ENCODE measurements at regions of chr16 and their contacts with region 1.

Region 1: GRCh38 chr16:84947022-84947421 is 64.3 kb downstream of the ZDHHC7 start:
- DNase-seq: peak in 1 of 4 donors; percentile 33
- ATAC-seq: no peak
- H3K4me3 ChIP-seq: no peak overlapping the region
- H3K27ac ChIP-seq: no peak overlapping the region
- H3K4me1 ChIP-seq: peaks cover 3% of the 10 kb centered on the region
- H3K27me3 ChIP-seq: no peaks in the 10 kb centered on the region
- CTCF ChIP-seq: no peak
- POLR2A ChIP-seq: no peak

Region 2: DNA sequence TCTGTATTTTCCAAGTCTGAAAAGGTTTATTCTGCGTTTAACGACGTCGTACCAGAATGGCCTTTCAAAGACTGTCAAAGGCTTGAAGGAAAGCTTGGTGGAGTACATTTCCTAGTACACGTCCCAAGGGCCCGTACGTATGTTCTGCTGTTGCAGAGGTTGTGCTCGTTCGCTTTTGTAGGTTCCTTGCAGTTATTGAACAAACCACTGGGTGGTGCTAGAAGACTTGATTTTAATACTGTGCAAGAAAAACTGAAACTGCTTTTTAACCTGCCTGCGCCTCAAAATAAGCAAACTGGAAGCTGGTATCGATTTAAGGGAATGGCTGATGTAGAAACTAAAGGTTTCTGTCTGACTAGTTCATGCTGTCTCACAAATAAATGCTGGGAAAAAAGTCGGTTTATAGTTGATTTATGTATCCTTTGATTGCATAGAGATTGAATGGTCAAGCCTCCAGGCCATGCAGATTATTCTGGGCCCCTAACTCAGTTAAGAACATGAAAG is 192.6 kb before region 1 on chr16:
- intact Hi-C with region 1: loop called (anchors 5 kb)
- DNase-seq: peak; percentile 69 to 90 (median 78)
- ATAC-seq: peak; percentile 94
- H3K4me3 ChIP-seq: no peak overlapping the region
- H3K27ac ChIP-seq: peak overlapping the region in 3 of 4 donors; percentile 42 to 53 (median 49)
- H3K4me1 ChIP-seq: peaks cover 14% of the 10 kb centered on the region
- H3K27me3 ChIP-seq: no peaks in the 10 kb centered on the region
- CTCF ChIP-seq: peak; percentile 57 to 89 (median 83)
- POLR2A ChIP-seq: no peak

Region 3: DNA sequence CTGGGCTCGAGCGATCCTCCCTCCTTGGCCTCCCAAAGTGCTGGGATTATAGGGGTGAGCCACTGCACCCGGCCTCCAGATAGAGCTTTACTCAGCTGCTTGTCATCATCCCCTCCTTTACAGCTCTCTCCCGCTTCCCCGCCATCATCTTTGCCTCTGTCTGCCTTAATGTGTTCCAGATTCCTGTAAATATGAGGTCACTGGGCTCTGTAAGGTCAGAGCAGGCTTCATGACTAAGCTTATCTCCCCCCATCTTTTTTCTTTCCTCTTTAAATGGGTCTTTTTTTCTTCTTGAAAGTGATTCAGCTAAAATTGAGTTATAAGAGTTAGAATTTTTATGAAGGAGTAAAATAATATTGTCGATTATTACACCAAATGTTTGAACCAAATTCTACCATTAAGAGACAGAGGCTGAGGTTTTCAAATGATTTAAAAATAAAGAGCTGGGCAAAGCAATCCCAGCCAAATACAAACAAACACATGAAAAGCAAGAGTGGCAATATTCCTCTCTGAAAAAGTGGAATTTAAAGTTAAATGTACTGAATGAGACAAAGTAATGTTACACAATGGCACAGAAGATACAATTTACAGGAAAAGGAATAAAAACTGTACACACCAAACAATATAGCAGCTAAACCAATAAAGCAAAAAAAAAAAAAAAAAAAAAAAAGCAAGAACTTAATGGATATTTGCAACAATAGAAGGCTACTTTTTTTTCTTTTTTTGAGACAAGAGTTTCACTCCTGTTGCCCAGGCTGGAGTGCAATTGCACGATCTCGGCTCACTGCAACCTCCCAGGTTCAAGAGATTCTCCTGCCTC is 65.1 kb before region 1 on chr16:
- intact Hi-C with region 1: no loop called
- DNase-seq: peak in 2 of 4 donors; percentile 10 to 35
- ATAC-seq: no peak
- H3K4me3 ChIP-seq: no peak overlapping the region
- H3K27ac ChIP-seq: no peak overlapping the region
- H3K4me1 ChIP-seq: peaks cover 10% of the 10 kb centered on the region
- H3K27me3 ChIP-seq: no peaks in the 10 kb centered on the region
- CTCF ChIP-seq: no peak
- POLR2A ChIP-seq: no peak

Region 4: DNA sequence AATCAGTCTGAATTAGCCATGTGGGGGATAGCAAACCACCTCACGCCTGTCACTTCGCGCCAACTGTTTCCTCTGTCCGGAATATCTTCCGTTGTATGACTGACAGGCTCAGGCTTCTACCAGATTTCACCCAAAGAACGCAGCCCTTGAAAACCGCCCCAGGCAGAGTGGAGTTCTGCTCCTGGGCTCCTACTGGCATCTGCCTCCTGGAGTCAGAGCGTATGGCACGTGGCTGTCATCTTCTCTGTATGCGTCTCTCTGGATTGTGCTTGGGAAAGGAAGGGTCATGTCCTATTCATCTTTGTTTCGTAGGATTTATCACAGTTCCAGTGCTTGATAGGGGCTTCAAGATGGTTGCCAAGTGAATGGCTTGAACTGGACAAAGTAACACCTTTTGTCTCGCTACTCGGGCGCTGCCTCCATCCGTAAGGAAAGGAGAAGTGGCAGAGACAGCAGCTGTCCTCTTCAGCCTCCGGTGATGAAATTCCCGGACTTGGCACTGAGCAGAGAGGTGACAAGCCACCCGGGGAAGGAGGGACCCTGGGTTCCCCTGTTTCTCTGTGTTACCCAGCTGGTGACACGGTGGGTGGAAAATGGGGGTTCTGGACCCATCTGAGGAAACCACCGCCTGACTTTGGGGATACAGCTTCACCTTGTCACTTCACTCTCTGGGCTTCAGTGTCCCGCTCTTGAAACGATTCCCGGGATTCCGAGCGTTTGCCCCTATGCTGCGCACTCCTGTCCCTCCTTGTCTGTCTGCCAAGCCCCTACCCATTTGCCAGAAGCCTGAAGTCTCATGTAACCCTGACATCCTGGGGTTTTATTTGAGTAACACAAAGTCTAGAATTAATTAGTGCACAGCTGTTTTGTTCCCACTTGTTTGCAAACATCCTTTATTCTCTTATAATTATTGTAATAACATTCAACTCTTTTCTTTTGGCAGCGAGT is 94.5 kb after region 1 on chr16:
- intact Hi-C with region 1: no loop called
- DNase-seq: no peak
- ATAC-seq: no peak
- H3K4me3 ChIP-seq: no peak overlapping the region
- H3K27ac ChIP-seq: no peak overlapping the region
- H3K4me1 ChIP-seq: peaks cover 14% of the 10 kb centered on the region
- H3K27me3 ChIP-seq: no peaks in the 10 kb centered on the region
- CTCF ChIP-seq: no peak
- POLR2A ChIP-seq: no peak

Region 5: GRCh38 chr16:85104821-85105391 is 157.9 kb after region 1 on chr16:
- intact Hi-C with region 1: no loop called
- DNase-seq: peak in 1 of 4 donors; percentile 41
- ATAC-seq: no peak
- H3K4me3 ChIP-seq: no peak overlapping the region
- H3K27ac ChIP-seq: no peak overlapping the region
- H3K4me1 ChIP-seq: no peaks in the 10 kb centered on the region
- H3K27me3 ChIP-seq: no peaks in the 10 kb centered on the region
- CTCF ChIP-seq: no peak
- POLR2A ChIP-seq: no peak

Measured in body of pancreas (tissue), 4 donors.